RWPE1 (cell line): ENCODE measurements at regions of chr7 and their contacts with region 1.

Region 1: GRCh38 chr7:73865738-73866445 is 4.9 kb downstream of the TMEM270 start:
- DNase-seq: peak; percentile 34
- H3K27ac ChIP-seq: no peak overlapping the region
- CTCF ChIP-seq: peak; percentile 71

Region 2: GRCh38 chr7:73647725-73648592 is 217.9 kb before region 1 on chr7:
- CTCF ChIA-PET with region 1: no interaction called
- POLR2A ChIA-PET with region 1: no interaction called
- DNase-seq: no peak
- H3K27ac ChIP-seq: no peak overlapping the region
- CTCF ChIP-seq: peak; percentile 63

Region 3: DNA sequence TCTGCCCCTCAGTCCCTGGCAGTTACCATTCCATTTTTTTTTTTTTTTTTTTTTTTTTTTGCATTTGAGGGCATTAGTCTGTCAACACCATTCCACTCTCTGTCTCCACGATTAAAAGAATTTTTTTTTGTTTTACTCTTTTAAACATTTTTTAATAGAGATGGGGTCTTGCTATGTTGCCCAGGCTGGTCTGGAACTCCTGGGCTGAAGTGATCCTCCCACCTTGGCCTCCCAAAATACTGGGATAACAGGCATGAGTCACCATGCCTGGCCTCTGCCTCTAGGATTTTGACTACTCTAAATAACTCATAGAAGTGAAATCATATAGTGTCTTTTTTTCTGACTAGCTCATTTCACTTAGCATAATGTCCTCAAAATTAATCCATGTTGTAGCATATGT is 79.3 kb before region 1 on chr7:
- CTCF ChIA-PET with region 1: no interaction called
- POLR2A ChIA-PET with region 1: no interaction called
- DNase-seq: no peak
- H3K27ac ChIP-seq: no peak overlapping the region
- CTCF ChIP-seq: no peak

Region 4: GRCh38 chr7:73851410-73852234 is 14.3 kb before region 1 on chr7:
- CTCF ChIA-PET with region 1: no interaction called
- POLR2A ChIA-PET with region 1: no interaction called
- DNase-seq: peak; percentile 91
- H3K27ac ChIP-seq: peak overlapping the region; percentile 97
- CTCF ChIP-seq: no peak

Region 5: DNA sequence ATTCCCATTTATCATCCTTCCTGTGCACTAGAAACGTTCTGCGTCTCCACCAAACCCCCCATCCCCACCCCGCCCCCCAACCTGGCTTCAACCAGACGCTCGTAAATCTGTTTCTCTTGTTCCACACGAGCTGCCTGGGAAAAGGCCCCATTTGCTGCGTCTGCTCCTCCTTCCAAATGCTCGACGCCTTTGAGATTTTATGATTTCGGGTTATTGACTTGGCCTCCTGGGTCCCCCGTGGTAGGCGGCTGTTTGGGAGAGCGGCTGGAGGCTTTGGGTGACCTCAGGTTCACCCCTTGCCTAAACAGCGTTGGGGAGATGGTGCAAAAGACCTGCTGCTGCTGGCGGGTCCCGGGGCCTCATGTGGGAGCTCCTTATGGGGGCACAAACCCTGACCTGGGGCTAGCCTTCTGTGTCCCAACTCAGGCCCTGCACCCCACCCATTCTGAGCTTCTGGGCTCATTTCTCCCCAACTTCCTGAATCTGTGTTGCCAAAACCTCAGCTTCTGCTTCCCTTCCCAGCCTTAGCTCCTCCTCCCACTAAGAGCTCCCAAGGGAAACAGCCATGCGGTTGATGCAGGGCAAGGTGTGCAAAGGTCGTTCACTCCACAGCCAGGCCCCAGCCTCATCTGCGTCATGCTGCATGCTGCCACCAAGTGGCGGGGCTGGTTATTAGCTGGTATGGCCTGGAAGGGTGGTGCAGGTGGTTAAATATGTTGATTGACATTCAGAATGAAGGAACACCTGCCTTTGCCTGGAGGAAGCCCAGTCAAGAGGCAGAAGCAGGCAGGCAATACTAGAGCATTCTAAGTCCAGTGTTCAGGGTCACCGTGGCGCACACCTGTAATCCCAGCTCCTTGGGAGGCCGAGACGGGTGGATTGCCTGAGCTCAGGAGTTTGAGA is 113.0 kb after region 1 on chr7:
- CTCF ChIA-PET with region 1: interaction called, 10 read pairs
- POLR2A ChIA-PET with region 1: interaction called, 3 read pairs
- DNase-seq: peak; percentile 38
- H3K27ac ChIP-seq: peak overlapping the region; percentile 9; the same call in 1 of the 2 replicates
- CTCF ChIP-seq: no peak

Region 6: DNA sequence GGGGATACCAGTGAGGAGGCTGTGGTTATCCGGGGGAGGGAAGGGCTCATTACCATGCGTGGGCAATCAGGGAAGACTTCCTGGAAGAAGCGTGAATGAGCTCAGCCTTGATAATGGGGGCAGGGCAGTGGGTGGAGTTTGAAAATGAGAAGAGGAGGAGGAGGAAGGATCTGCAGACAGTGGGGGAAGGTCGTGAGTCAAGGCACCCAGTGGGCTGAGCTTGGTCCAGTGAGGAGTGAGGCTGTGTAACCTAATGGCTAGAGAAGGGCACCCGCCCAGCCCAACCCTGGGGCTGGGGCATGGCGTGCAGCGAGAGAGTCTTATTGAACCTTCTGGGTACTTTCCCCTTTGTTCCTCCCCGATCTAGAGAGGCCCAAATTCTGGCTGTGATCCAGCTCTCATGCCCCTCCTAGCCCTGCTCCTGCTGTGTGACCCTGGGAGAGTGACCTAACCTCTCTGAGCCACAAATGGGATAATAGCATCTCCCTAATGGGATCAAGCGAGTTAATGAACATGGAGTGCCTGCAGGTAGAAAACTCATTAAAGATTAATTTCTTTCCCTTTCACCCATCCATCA is 454.8 kb after region 1 on chr7:
- CTCF ChIA-PET with region 1: no interaction called
- POLR2A ChIA-PET with region 1: no interaction called
- DNase-seq: no peak
- H3K27ac ChIP-seq: peak overlapping the region; percentile 98; the same call in 1 of the 2 replicates
- CTCF ChIP-seq: no peak